RWPE1 (cell line): ENCODE measurements at regions of chr2 and their contacts with region 1.

Region 1: GRCh38 chr2:119960821-119961220 is 52.1 kb upstream of the EPB41L5 start:
- DNase-seq: no peak
- H3K27ac ChIP-seq: no peak overlapping the region
- CTCF ChIP-seq: no peak

Region 2: DNA sequence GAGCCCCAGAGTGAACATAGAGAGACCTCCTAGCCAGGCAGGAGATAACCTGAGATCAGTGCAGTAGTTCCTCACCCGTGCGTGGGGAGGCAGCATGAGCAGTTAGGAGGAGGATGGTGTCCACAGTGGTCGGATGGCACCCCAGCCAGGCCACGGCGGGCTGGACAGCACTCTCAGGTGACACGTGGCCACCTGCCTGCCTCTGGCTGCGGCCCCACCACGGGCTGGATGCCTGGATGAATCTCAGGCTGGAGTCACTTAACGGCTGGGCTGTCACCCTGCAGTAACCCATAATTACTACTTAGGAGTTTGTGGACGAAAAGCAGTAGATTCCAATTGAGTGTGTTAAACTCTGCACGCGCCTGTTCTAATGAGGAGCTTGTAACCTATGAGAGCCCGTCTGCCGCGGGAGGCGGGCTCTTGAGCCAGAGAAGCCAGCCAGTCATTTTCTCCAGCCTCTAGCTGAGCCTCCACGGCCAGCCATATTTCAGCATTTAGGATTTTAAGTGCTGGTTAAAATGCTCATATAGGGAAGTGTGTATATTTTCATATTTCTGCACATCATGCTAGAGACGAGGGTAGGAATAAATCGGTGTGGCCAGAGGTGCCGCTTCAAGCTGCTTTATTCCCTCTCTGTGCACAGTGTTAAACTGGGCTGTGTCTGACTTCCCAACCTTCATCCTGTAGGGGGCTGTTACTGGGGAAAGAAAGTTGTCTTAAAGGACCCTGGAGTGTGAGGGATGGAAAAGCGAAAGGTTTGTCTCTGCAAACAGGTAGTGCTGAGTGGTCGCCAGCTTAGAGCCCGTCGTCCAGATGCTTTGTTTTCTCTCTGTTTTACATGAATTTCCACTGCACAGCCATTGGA is 918.8 kb after region 1 on chr2:
- CTCF ChIA-PET with region 1: no interaction called
- POLR2A ChIA-PET with region 1: interaction called, 11 read pairs
- DNase-seq: peak; percentile 16
- H3K27ac ChIP-seq: peak overlapping the region; percentile 45
- CTCF ChIP-seq: no peak